ENCODE measurements at regions of chr13 and their contacts with region 1.

Region 1: DNA sequence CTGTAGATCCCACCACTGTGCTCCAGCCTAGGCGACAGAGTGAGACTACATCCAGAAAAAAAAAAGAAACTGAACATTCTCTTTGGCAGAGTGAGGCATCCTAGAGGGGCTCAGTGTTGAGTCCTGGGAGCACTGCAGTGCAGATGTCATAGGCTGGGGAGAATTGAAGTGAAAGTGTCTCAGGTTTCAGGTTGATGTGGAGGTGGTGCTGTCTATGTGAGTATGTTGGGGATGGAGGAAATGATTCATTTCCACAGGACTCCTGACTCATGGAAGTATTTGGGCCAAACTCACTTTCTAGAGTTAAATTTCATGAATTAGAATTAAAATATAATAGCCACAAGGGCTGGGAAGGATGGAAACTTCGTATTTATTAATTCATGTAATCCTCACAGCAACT is 134.4 kb upstream of the TSC22D1 start:
- DNase-seq: no peak
- ATAC-seq: no peak
- H3K4me3 ChIP-seq: no peak overlapping the region
- H3K27ac ChIP-seq: peak overlapping the region; percentile 76 to 80
- H3K4me1 ChIP-seq: peaks cover 1 to 12% of the 10 kb centered on the region in 2 donors
- H3K27me3 ChIP-seq: no peaks in the 10 kb centered on the region

Region 2: DNA sequence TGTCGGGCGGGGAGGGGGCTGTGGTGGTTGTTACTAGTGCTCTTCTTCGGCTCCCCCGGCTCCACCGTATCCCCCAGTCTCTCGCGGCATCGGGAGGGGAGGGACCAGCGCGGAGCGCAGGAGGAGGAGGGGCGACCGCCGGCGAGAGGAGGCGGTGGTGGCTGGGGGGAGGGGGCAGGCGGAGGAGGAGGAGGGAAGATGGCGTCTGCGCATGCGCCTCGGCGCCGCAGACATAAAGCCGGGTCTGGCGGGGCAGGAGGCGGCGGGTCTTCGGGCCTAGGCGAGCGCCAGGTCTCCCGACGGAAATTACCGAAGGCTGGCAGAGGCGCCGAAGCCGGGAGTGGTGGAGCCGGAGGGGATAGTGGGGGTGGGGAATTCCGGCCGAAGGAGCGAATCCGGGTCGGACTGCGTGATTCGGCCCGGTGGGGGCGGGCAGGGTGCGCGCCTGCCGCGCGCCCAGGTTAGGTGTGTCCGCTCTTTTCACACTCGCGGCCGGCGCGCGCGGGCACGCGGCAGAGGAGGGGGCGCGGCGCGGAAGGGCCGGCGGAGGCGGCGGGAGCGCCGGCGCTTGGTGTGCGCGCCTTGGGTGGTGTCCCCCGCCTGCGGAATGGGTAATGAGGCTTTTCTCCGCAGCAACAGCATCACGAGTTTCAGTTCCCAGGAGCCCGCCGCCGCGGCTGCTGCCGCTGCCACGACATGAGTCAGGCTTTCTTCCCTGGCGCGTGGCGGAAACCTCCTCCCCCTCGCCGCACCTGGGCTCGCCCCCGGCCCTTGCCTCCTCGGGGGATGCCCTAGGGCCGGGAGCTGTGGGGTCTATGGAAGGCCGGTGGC is 133.1 kb before region 1 on chr13:
- intact Hi-C with region 1: loop called (anchors 2 to 5 kb)
- DNase-seq: peak; percentile 98 to 99
- ATAC-seq: peak; percentile 94
- H3K4me3 ChIP-seq: peak overlapping the region; percentile 95 to 97
- H3K27ac ChIP-seq: peak overlapping the region; percentile 95 to 96
- H3K4me1 ChIP-seq: peaks cover 3% of the 10 kb centered on the region in 2 donors
- H3K27me3 ChIP-seq: no peaks in the 10 kb centered on the region

Region 3: GRCh38 chr13:44667943-44668342 is 42.6 kb before region 1 on chr13:
- intact Hi-C with region 1: loop called in 1 of 2 experiments (anchors 5 kb)
- DNase-seq: no peak
- ATAC-seq: no peak
- H3K4me3 ChIP-seq: peak overlapping the region in 1 of 2 donors; percentile 8
- H3K27ac ChIP-seq: peak overlapping the region in 1 of 2 donors; percentile 33
- H3K4me1 ChIP-seq: peaks cover 0 to 4% of the 10 kb centered on the region in 2 donors
- H3K27me3 ChIP-seq: no peaks in the 10 kb centered on the region

Region 4: GRCh38 chr13:44843403-44843802 is 132.8 kb after region 1 on chr13:
- intact Hi-C with region 1: no loop called
- DNase-seq: no peak
- ATAC-seq: no peak
- H3K4me3 ChIP-seq: no peak overlapping the region
- H3K27ac ChIP-seq: peak overlapping the region in 1 of 2 donors; percentile 89
- H3K4me1 ChIP-seq: peaks cover 0 to 4% of the 10 kb centered on the region in 2 donors
- H3K27me3 ChIP-seq: no peaks in the 10 kb centered on the region